Naive thymus-derived CD8-positive, alpha-beta T cell (primary cell): ENCODE measurements at regions of chr6 and their contacts with region 1.

Region 1: DNA sequence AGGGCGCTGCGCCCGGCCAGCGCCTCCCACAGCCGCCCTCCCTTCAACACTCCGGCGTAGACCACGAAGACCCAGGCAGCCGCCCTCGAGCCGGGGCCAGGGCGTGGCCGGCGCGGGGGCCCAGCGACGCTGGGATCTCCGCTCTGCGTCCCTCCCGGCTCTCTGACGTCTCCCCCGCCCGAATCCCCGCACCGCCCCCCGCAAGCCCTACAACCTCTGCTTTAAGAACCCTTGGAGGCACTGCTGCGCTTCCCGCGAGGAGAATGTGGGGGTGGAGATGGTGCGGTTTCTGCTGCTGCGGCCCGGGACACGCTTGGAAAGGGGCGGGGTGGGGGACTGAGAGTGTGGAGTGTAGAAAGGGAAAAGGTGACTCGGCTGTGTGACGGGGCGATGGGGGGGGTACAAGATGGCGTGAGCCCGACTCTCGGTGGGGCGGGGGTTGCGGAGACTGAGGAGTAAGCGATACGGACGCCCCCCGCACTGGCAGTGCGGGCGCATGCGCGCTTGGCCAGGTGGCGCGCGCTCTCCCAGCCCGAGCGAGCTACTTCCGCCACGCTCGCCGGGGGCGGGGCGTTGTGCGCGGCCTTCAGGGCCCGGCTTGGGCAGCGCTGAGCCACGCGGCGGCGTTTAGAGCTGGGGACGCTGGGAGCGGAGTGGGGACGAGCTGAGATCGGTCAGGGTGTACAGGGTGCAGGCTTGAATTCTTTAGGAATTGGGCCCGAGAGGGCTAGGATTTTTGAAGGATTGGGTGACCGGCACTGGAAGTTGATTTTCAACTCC is at the start of gene SUPT3H:
- DNase-seq: peak; percentile 87 to 96 (median 93)
- ATAC-seq: peak; percentile 80
- H3K4me3 Mint-ChIP-seq: peak within 1 kb of the TSS; percentile 92 to 100 (median 98)
- H3K27ac Mint-ChIP-seq: peak within 1 kb of the TSS; percentile 97 to 100 (median 98)
- H3K4me1 Mint-ChIP-seq: peaks cover 10 to 38% (median 36%) of the 10 kb centered on the region in 4 donors
- H3K27me3 Mint-ChIP-seq: no peaks in the 10 kb centered on the region
- polyA plus RNA-seq, gene SUPT3H: 16.9 to 20.8 (median 20.0) TPM

Region 2: DNA sequence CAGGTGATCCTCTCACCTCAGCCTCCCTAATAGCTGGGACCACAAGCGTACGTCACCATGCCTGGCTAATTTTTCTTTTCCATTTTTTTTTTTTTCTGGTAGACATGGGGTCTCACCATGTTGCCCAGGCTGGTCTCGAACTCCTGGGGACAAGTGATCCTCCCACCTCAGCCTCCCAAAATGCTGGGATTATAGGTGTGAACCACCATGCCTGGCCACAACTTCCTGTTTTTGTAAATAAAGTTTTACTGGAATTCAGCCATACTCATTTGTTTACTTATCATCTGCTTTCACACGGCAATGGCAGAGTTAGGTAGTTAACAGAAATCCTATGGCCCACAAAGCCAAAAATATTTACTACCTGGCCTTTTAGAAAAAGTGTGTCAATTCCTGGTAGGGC is 57.4 kb before region 1 on chr6:
- POLR2A ChIA-PET with region 1: interaction called, 13 read pairs
- DNase-seq: no peak
- ATAC-seq: no peak
- H3K4me3 Mint-ChIP-seq: peak overlapping the region in 4 of 10 donors; percentile 18 to 61 (median 41)
- H3K27ac Mint-ChIP-seq: peak overlapping the region in 8 of 10 donors; percentile 60 to 93 (median 76)
- H3K4me1 Mint-ChIP-seq: peaks cover 30 to 60% (median 46%) of the 10 kb centered on the region in 4 donors
- H3K27me3 Mint-ChIP-seq: no peaks in the 10 kb centered on the region

Region 3: GRCh38 chr6:45327956-45328522 is 49.7 kb before region 1 on chr6 and contains the start of gene RUNX2:
- POLR2A ChIA-PET with region 1: interaction called, 11 read pairs
- DNase-seq: peak in 8 of 10 donors; percentile 12 to 64 (median 44)
- ATAC-seq: peak; percentile 83 to 88
- H3K4me3 Mint-ChIP-seq: peak within 1 kb of the TSS; percentile 83 to 97 (median 91)
- H3K27ac Mint-ChIP-seq: peak within 1 kb of the TSS; percentile 77 to 97 (median 94)
- H3K4me1 Mint-ChIP-seq: peaks cover 20 to 80% (median 66%) of the 10 kb centered on the region in 4 donors
- H3K27me3 Mint-ChIP-seq: no peaks in the 10 kb centered on the region
- polyA plus RNA-seq, gene RUNX2: 31.3 to 44.3 (median 42.5) TPM

Region 4: DNA sequence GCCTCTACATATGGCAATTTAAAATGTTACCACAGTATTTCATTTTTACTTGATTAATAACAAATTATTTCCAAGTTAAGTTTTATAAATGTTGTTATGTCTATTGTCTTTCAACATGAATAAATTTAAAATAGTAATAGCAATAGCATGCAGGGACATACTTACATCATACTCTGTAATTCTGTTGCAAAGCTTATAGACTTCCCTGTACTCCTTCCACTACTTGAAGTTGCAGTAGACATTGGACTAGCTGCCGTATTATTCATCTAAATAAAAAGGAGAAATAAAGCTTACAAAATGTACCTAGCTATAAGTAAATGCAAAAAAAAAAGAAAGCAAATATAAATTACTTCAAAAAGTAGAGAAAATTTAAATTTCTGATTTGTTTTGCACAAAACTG is 12.7 kb before region 1 on chr6:
- POLR2A ChIA-PET with region 1: interaction called, 10 read pairs
- DNase-seq: no peak
- ATAC-seq: no peak
- H3K4me3 Mint-ChIP-seq: no peak overlapping the region
- H3K27ac Mint-ChIP-seq: no peak overlapping the region
- H3K4me1 Mint-ChIP-seq: peaks cover 8 to 45% (median 26%) of the 10 kb centered on the region in 4 donors
- H3K27me3 Mint-ChIP-seq: no peaks in the 10 kb centered on the region

Region 5: GRCh38 chr6:45421709-45422502 is 44.2 kb after region 1 on chr6:
- POLR2A ChIA-PET with region 1: interaction called, 24 read pairs
- DNase-seq: peak; percentile 21 to 67 (median 50)
- ATAC-seq: peak; percentile 34 to 43
- H3K4me3 Mint-ChIP-seq: peak overlapping the region; percentile 93 to 99 (median 96)
- H3K27ac Mint-ChIP-seq: peak overlapping the region; percentile 86 to 99 (median 95)
- H3K4me1 Mint-ChIP-seq: peaks cover 19 to 53% (median 42%) of the 10 kb centered on the region in 4 donors
- H3K27me3 Mint-ChIP-seq: peaks cover 0 to 24% (median 0%) of the 10 kb centered on the region in 5 donors

Region 6: GRCh38 chr6:45586216-45587171 is 208.8 kb after region 1 on chr6:
- POLR2A ChIA-PET with region 1: interaction called, 11 read pairs
- DNase-seq: peak; percentile 20 to 93 (median 68)
- ATAC-seq: peak; percentile 83 to 84
- H3K4me3 Mint-ChIP-seq: peak overlapping the region; percentile 73 to 91 (median 83)
- H3K27ac Mint-ChIP-seq: peak overlapping the region; percentile 51 to 97 (median 90)
- H3K4me1 Mint-ChIP-seq: peaks cover 36 to 68% (median 62%) of the 10 kb centered on the region in 4 donors
- H3K27me3 Mint-ChIP-seq: no peaks in the 10 kb centered on the region